GM10248 (cell line): ENCODE measurements at regions of chr12 and their contacts with region 1.

Region 1: GRCh38 chr12:1533602-1534304 is 60.6 kb downstream of the FBXL14 start:
- DNase-seq: peak; percentile 69
- CTCF ChIP-seq: no peak

Region 2: GRCh38 chr12:1488908-1489381 is 44.8 kb before region 1 on chr12:
- CTCF ChIA-PET with region 1: no interaction called
- POLR2A ChIA-PET with region 1: no interaction called
- DNase-seq: no peak
- CTCF ChIP-seq: no peak

Region 3: DNA sequence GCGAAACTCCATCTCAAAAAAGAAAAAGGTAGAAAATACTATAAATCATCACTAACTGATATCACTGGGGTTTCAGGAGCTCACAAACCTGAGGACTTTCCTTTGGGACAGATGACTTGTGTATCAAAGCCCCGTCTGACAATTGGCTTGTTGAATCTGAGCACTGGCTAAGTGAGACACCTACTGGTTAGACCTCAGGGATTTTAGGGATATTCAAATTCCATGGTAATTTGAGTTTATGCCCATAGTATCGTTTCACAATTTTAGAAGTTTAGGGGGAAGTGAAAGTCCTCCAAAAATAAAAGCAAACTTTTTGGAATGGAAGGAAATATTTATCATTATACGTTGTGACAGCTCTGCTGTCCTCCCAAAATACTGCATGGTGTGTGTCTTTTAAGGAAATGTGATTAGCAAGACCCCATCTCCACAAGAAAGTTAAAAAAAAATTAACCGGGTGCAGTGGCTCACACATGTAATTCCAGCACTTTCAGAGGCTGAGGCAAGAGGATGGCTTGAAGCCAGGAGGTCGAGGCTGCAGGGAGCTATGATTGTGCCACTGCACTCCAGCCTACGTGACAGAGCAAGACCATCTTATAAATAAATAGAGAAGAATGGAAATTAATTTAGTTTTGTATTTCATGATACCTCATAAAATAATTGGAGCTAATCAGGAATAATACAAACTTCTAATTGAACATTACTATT is 11.4 kb after region 1 on chr12:
- CTCF ChIA-PET with region 1: interaction called, 19 read pairs
- POLR2A ChIA-PET with region 1: no interaction called
- DNase-seq: no peak
- CTCF ChIP-seq: no peak

Region 4: GRCh38 chr12:1553987-1554982 is 20.5 kb after region 1 on chr12:
- CTCF ChIA-PET with region 1: interaction called, 17 read pairs
- POLR2A ChIA-PET with region 1: interaction called, 4 read pairs
- DNase-seq: peak; percentile 88
- CTCF ChIP-seq: no peak